ENCODE measurements at regions of chr9 and their contacts with region 1.

Region 1: GRCh38 chr9:114681594-114682332 is at the start of gene TEX48:
- DNase-seq: peak; percentile 34 to 90 (median 64)
- ATAC-seq: peak; percentile 88 to 91 (median 90)
- H3K4me3 ChIP-seq: no peak within 1 kb of the TSS
- H3K4me3 Mint-ChIP-seq: peak within 1 kb of the TSS in 2 of 3 donors; percentile 31 to 41
- H3K27ac ChIP-seq: peak within 1 kb of the TSS; percentile 39
- H3K27ac Mint-ChIP-seq: peak within 1 kb of the TSS; percentile 68 to 87
- H3K4me1 ChIP-seq: peaks cover 0 to 9% of the 10 kb centered on the region in 2 experiments
- H3K4me1 Mint-ChIP-seq: peaks cover 15 to 28% (median 16%) of the 10 kb centered on the region in 3 donors
- H3K27me3 ChIP-seq: no peaks in the 10 kb centered on the region
- H3K27me3 Mint-ChIP-seq: peaks cover 7 to 11% of the 10 kb centered on the region in 2 donors
- total RNA-seq, gene TEX48: 0.51 TPM in 1 of 5 donors, not detected in the others

Region 2: GRCh38 chr9:114906908-114907571 is 225.3 kb after region 1 on chr9:
- CTCF ChIA-PET with region 1: interaction called, 7 to 10 read pairs
- POLR2A ChIA-PET with region 1: no interaction called
- DNase-seq: peak in 3 of 35 experiments; percentile 23 to 59 (median 35)
- ATAC-seq: peak in 2 of 4 experiments; percentile 19 to 26
- H3K4me3 ChIP-seq: no peak overlapping the region
- H3K4me3 Mint-ChIP-seq: peak overlapping the region in 1 of 3 donors; percentile 75
- H3K27ac ChIP-seq: peak overlapping the region; percentile 81
- H3K27ac Mint-ChIP-seq: peak overlapping the region; percentile 98
- H3K4me1 ChIP-seq: peaks cover 24 to 71% of the 10 kb centered on the region in 2 experiments
- H3K4me1 Mint-ChIP-seq: peaks cover 53 to 64% (median 58%) of the 10 kb centered on the region in 3 donors
- H3K27me3 ChIP-seq: no peaks in the 10 kb centered on the region
- H3K27me3 Mint-ChIP-seq: no peaks in the 10 kb centered on the region

Region 3: GRCh38 chr9:115013998-115014397 is 332.2 kb after region 1 on chr9:
- CTCF ChIA-PET with region 1: interaction called, 14 to 19 read pairs
- POLR2A ChIA-PET with region 1: no interaction called
- DNase-seq: peak; percentile 55 to 88 (median 74)
- ATAC-seq: peak; percentile 80 to 91 (median 88)
- H3K4me3 ChIP-seq: no peak overlapping the region
- H3K4me3 Mint-ChIP-seq: no peak overlapping the region
- H3K27ac ChIP-seq: no peak overlapping the region
- H3K27ac Mint-ChIP-seq: peak overlapping the region in 1 of 2 donors; percentile 28
- H3K4me1 ChIP-seq: peaks cover 0 to 5% of the 10 kb centered on the region in 2 experiments
- H3K4me1 Mint-ChIP-seq: peaks cover 17 to 19% (median 18%) of the 10 kb centered on the region in 3 donors
- H3K27me3 ChIP-seq: peaks cover 0 to 4% of the 10 kb centered on the region in 2 experiments
- H3K27me3 Mint-ChIP-seq: peaks cover 0 to 7% of the 10 kb centered on the region in 2 donors

Region 4: GRCh38 chr9:115341426-115341825 is 659.7 kb after region 1 on chr9:
- CTCF ChIA-PET with region 1: no interaction called
- POLR2A ChIA-PET with region 1: no interaction called
- DNase-seq: no peak
- ATAC-seq: no peak
- H3K4me3 ChIP-seq: no peak overlapping the region
- H3K4me3 Mint-ChIP-seq: no peak overlapping the region
- H3K27ac ChIP-seq: no peak overlapping the region
- H3K27ac Mint-ChIP-seq: no peak overlapping the region
- H3K4me1 ChIP-seq: no peaks in the 10 kb centered on the region
- H3K4me1 Mint-ChIP-seq: no peaks in the 10 kb centered on the region
- H3K27me3 ChIP-seq: peaks cover 0 to 2% of the 10 kb centered on the region in 2 experiments
- H3K27me3 Mint-ChIP-seq: peaks cover 15 to 21% of the 10 kb centered on the region in 2 donors

Measured in T-cell (primary cell).